Endothelial cell of umbilical vein (primary cell): ENCODE measurements at regions of chr7 and their contacts with region 1.

Region 1: DNA sequence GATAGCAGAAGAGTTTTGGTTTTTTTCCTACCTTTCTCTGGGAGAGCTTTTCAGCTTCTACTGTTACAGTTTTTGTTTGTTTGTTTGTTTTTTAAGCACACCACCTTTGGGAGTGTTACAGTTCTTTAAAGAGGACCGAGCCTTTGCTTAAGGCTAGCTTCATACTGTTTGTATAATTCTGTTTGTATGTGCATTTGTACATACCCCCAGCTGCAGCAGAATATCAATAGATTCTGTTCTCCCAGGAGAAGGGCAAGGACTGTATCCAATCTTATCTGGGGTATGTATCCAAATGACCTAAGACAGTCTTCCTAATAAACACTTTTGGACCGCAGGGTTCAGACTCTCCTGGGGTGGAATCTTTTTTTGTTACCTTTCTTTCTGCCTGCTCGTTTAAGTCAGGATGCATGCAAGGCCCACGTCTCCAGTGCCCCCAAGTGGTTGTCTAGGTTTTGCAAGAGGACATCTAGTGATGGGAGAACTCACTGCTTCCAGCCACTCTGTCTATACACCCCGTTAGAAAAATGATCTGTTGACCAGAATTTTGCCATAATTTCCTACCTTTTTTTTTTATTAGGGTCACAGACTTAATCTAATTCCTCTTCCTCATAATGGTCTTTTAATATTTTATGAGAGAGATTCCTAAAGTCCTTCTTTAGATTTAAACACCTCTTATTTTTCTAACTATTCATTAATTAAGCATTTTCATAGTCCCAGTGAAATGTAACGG is 23.9 kb downstream of the NRF1 start:
- DNase-seq: peak; percentile 76
- H3K4me3 ChIP-seq: no peak overlapping the region
- H3K27ac ChIP-seq: no peak overlapping the region
- H3K4me1 ChIP-seq: no peaks in the 10 kb centered on the region
- H3K27me3 ChIP-seq: no peaks in the 10 kb centered on the region
- CTCF ChIP-seq: peak; percentile 68 to 81
- POLR2A ChIP-seq: no peak

Region 2: GRCh38 chr7:129553861-129554530 is 81.5 kb before region 1 on chr7:
- CTCF ChIA-PET with region 1: no interaction called
- POLR2A ChIA-PET with region 1: no interaction called
- dilution Hi-C with region 1: no loop called
- intact Hi-C with region 1: no loop called
- DNase-seq: peak; percentile 16
- H3K4me3 ChIP-seq: no peak overlapping the region
- H3K27ac ChIP-seq: no peak overlapping the region
- H3K4me1 ChIP-seq: no peaks in the 10 kb centered on the region
- H3K27me3 ChIP-seq: peaks cover 0 to 13% of the 10 kb centered on the region in 2 experiments
- CTCF ChIP-seq: no peak
- POLR2A ChIP-seq: no peak

Region 3: GRCh38 chr7:129574487-129574886 is 61.0 kb before region 1 on chr7:
- CTCF ChIA-PET with region 1: no interaction called
- POLR2A ChIA-PET with region 1: no interaction called
- dilution Hi-C with region 1: no loop called
- intact Hi-C with region 1: no loop called
- DNase-seq: peak; percentile 69
- H3K4me3 ChIP-seq: no peak overlapping the region
- H3K27ac ChIP-seq: peak overlapping the region; percentile 31
- H3K4me1 ChIP-seq: peaks cover 8% of the 10 kb centered on the region
- H3K27me3 ChIP-seq: no peaks in the 10 kb centered on the region
- CTCF ChIP-seq: no peak
- POLR2A ChIP-seq: no peak

Region 4: GRCh38 chr7:129611246-129612111 is 24.0 kb before region 1 on chr7 and contains the start of gene NRF1:
- CTCF ChIA-PET with region 1: interaction called, 133 read pairs
- POLR2A ChIA-PET with region 1: no interaction called
- dilution Hi-C with region 1: no loop called
- intact Hi-C with region 1: loop called (anchors 1 kb)
- DNase-seq: peak; percentile 92
- H3K4me3 ChIP-seq: peak within 1 kb of the TSS; percentile 84 to 96 (median 95)
- H3K27ac ChIP-seq: peak within 1 kb of the TSS; percentile 81
- H3K4me1 ChIP-seq: peaks cover 13% of the 10 kb centered on the region
- H3K27me3 ChIP-seq: no peaks in the 10 kb centered on the region
- CTCF ChIP-seq: peak in 1 of 2 donors; percentile 10
- POLR2A ChIP-seq: peak; percentile 87
- total RNA-seq, gene NRF1: 17.4 and 20.3 TPM in 2 replicates